GM12878 (cell line): ENCODE measurements at regions of chr1 and their contacts with region 1.

Region 1: DNA sequence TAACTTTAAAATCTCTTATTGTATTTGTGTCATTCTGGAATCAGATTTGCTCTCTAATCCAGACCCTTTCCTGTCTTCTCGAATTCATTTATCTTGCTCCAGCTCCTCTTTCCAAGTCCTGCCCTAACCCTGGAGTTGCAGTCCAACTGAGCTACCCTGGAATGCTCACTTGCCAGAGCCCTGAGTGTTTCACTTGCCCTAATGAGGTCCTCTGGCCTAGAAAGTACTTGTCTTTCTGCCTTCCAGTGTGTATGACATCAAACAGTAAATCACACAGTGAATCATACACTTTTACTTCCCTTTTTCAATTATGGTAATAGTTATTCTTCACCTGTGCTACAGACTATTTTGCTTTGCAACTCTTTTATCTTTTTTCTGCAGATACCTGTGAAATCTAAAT is 96.9 kb downstream of the NEK7 start:
- DNase-seq: peak; percentile 50
- ATAC-seq: peak; percentile 99
- H3K4me3 ChIP-seq: no peak overlapping the region
- H3K27ac ChIP-seq: peak overlapping the region; percentile 75
- H3K4me1 ChIP-seq: peaks cover 16% of the 10 kb centered on the region
- H3K27me3 ChIP-seq: no peaks in the 10 kb centered on the region
- CTCF ChIP-seq: no peak
- EP300 ChIP-seq: peak; percentile 38 to 86; a peak in 2 of 4 replicates
- POLR2A ChIP-seq: no peak
- RAD21 ChIP-seq: peak; percentile 18; the same call in 1 of the 2 replicates

Region 2: GRCh38 chr1:198167436-198167934 is 86.2 kb before region 1 on chr1:
- CTCF ChIA-PET with region 1: no interaction called
- POLR2A ChIA-PET with region 1: interaction called, 3 read pairs
- RAD21 ChIA-PET with region 1: interaction called, 15 read pairs
- SMC1A ChIA-PET with region 1: interaction called, 44 read pairs
- in situ Hi-C with region 1: no loop called
- intact Hi-C with region 1: no loop called
- DNase-seq: peak; percentile 85
- ATAC-seq: peak; percentile 80
- H3K4me3 ChIP-seq: peak overlapping the region; percentile 57
- H3K27ac ChIP-seq: peak overlapping the region; percentile 59
- H3K4me1 ChIP-seq: peaks cover 47% of the 10 kb centered on the region
- H3K27me3 ChIP-seq: no peaks in the 10 kb centered on the region
- CTCF ChIP-seq: no peak
- EP300 ChIP-seq: peak; percentile 67 to 89; a peak in 3 of 4 replicates
- POLR2A ChIP-seq: no peak
- RAD21 ChIP-seq: no peak